ENCODE measurements at regions of chr7 and their contacts with region 1.

Region 1: DNA sequence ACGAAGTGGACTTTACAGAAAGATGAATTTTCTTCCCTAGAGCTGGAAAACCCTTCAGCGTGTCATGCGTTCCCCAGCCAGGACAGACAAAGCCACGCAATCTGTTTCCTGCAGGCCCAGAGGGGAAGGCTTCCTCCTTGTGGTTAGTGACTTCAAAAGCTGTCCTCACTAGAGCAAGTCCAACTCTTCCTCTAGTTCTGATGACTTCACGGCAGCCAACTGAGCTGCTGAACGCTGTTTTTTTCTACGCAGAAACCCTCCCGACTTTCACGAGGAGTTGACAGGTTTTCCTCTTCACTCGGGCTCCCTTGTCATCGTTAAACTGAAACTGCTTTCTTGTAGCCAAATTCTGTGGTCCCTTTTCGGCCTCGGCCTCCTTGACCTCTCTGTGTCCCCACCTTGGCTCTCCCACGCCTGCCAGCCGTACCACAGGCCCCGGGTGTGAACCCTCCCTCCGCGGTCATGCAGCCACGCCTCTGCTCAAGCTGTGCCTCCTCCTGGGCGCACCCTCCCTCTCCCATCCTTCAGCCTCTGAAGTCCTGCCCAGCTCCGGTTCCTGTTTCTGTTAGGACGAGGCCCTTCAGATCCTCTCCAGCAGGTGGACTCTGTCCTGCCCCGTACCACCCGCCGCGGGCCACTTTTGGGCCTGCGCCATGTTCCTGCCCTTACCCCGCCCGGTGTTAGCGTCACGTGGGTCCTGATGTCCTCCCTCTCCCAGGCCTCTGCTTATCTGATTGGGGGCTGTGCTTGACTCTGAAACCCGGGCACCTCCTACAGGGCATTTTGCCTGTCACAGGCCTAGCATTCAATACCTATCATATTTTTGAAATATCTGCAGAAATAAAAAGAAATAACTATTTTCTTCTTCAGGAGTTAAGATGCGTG is 39.3 kb downstream of the CUX1 start:
- H3K4me3 Mint-ChIP-seq: peak overlapping the region; percentile 77
- H3K27ac Mint-ChIP-seq: peak overlapping the region; percentile 97
- H3K4me1 Mint-ChIP-seq: peaks cover 71% of the 10 kb centered on the region
- H3K27me3 Mint-ChIP-seq: no peaks in the 10 kb centered on the region

Region 2: GRCh38 chr7:101882595-101883564 is 26.2 kb after region 1 on chr7:
- intact Hi-C with region 1: loop called (anchors 2 kb)
- H3K4me3 Mint-ChIP-seq: no peak overlapping the region
- H3K27ac Mint-ChIP-seq: peak overlapping the region; percentile 70
- H3K4me1 Mint-ChIP-seq: peaks cover 76% of the 10 kb centered on the region
- H3K27me3 Mint-ChIP-seq: no peaks in the 10 kb centered on the region

Region 3: GRCh38 chr7:101913851-101914250 is 57.1 kb after region 1 on chr7:
- intact Hi-C with region 1: loop called (anchors 1 kb)
- H3K4me3 Mint-ChIP-seq: peak overlapping the region; percentile 63
- H3K27ac Mint-ChIP-seq: peak overlapping the region; percentile 71
- H3K4me1 Mint-ChIP-seq: peaks cover 35% of the 10 kb centered on the region
- H3K27me3 Mint-ChIP-seq: no peaks in the 10 kb centered on the region